Ascending aorta (tissue), 2 donors: ENCODE measurements at regions of chr7 and their contacts with region 1.

Region 1: DNA sequence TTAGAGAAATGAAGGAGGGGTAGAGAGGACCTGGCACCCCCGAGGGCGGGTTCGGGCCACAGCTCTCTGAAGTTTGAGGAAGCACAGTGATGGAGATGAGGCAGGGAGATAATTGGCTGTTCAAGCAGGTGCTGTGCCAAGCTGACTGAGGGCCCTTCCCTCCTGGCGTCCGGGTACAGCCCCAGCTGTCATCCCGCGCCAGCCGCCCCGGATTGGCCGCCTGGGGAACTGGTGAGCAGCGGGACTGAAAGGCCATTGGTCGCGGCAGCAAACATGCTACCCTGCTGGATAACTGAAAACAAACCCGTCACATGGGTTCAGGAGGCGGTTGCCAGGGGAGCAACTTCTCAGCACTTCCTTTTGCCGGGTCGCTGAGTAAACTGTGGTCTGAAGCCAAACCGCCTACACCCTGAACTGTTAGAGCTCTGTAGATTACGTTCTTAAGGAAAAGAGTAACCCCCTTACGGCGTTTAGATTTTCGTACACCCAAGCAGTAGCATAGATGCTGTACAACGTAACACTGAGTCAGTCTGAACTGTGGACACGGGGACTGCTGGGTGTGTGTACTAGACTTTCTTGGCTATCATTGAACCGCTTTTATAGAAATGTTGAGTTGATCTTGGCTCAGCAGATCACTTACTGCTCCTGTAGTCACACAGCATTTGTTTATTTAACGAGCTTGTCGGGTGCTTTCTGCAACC is 1.3 kb downstream of the INSIG1 start:
- DNase-seq: peak; percentile 93 to 96
- H3K4me3 ChIP-seq: peak overlapping the region; percentile 88 to 97
- H3K27ac ChIP-seq: peak overlapping the region; percentile 91 to 94
- H3K4me1 ChIP-seq: peaks cover 3 to 5% of the 10 kb centered on the region in 2 donors
- H3K27me3 ChIP-seq: no peaks in the 10 kb centered on the region
- CTCF ChIP-seq: no peak

Region 2: DNA sequence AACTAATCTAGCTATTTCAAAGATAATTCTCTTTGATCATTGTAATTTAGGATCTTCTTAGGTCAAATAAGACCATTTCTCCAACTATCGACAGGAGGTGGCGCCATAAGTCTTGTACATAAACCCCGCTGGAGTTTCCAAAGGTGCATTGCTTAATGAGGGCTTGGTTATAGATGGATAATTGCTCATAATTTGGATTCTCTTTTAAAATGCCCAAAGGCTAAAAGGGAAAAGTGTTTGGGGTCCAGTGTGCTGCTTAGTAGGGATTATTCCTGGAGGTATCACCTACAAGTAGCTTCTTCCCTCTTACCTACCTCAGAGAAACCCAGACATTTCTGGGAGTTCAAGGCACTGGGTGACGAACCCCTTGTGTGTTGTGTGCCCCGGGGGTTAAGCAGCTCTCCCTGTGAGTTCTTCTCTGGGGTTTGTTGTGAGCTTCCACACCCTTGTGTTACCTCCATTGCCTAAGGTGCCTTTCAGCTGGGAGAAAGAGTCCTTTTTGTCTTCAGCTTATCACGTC is 371.3 kb before region 1 on chr7:
- intact Hi-C with region 1: loop called (anchors 1 kb)
- DNase-seq: peak in 1 of 2 donors; percentile 91
- H3K4me3 ChIP-seq: peak overlapping the region; percentile 67 to 88
- H3K27ac ChIP-seq: peak overlapping the region; percentile 75 to 85
- H3K4me1 ChIP-seq: peaks cover 0 to 6% of the 10 kb centered on the region in 2 donors
- H3K27me3 ChIP-seq: no peaks in the 10 kb centered on the region
- CTCF ChIP-seq: peak; percentile 50 to 74 (median 50)

Region 3: DNA sequence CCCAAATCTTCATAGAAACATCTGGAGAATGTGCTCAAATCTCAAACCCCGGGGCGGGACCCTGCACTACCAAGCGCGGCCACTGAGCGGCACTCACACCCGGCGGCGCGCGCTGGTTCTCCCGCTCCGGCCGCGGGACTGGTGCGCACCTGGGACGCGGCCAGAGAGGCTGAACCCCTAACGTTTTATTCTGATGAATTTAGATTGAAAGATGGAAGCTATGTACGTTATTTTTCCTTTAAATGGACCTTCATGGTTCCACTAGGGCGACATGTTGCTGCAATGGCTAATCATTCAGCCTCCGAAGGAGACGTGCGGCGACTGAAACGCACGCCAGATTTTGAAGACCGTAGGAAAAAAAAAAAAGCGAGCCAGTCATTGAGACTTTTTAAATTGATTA is 108.3 kb before region 1 on chr7:
- intact Hi-C with region 1: loop called (anchors 2 kb)
- DNase-seq: peak in 1 of 2 donors; percentile 75
- H3K4me3 ChIP-seq: no peak overlapping the region
- H3K27ac ChIP-seq: no peak overlapping the region
- H3K4me1 ChIP-seq: no peaks in the 10 kb centered on the region
- H3K27me3 ChIP-seq: no peaks in the 10 kb centered on the region
- CTCF ChIP-seq: peak; percentile 74 to 91 (median 86)

Region 4: GRCh38 chr7:155344600-155345433 is 45.8 kb after region 1 on chr7:
- intact Hi-C with region 1: loop called (anchors 2 kb)
- DNase-seq: peak in 1 of 2 donors; percentile 87
- H3K4me3 ChIP-seq: peak overlapping the region; percentile 27 to 60
- H3K27ac ChIP-seq: no peak overlapping the region
- H3K4me1 ChIP-seq: peaks cover 0 to 4% of the 10 kb centered on the region in 2 donors
- H3K27me3 ChIP-seq: no peaks in the 10 kb centered on the region
- CTCF ChIP-seq: peak; percentile 52 to 93 (median 81)

Region 5: DNA sequence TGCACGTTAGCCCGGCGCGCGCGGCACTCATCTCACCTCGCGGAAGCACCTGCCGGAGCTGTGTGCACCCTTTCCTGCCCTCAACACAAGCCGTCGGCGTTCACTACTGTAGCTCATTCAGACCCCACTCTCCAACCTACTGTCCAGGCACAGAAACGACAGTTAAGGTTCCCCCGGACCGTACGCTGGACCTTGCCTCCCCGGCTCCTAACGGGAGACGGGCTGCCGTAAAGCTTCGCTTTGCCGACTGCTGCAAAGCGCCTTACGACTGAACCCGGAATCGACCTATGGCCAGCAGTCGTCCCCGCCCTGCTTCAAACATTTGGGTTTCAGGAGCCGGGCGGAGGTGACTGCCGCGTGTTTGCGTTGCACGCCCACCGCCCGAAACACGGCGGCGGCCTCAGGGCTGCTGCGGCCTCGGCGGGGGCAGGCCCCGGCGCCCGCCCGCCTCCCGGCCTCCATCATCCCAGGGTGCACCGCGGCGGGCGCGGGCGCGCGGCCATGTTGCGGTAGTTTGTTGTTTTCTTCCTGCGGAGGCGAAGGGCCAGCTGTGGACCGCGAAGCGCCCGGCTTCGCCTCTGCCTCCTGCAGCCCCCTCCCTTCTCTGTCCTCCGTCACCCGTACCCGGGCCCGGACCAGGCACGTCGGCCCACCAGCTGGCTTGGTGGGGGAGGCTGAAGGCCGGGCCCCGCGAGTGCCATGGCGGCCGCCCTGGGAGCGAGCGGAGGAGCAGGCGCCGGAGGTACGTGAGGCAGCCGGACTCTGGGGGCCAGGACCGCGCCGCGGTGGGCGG is 345.4 kb after region 1 on chr7 and contains the start of gene RBM33:
- intact Hi-C with region 1: loop called (anchors 10 kb)
- DNase-seq: peak in 1 of 2 donors; percentile 80
- H3K4me3 ChIP-seq: peak within 1 kb of the TSS; percentile 93 to 100
- H3K27ac ChIP-seq: peak within 1 kb of the TSS; percentile 94
- H3K4me1 ChIP-seq: peaks cover 0 to 13% of the 10 kb centered on the region in 2 donors
- H3K27me3 ChIP-seq: no peaks in the 10 kb centered on the region
- CTCF ChIP-seq: no peak
- total RNA-seq, gene RBM33: 44.2 TPM

Region 6: DNA sequence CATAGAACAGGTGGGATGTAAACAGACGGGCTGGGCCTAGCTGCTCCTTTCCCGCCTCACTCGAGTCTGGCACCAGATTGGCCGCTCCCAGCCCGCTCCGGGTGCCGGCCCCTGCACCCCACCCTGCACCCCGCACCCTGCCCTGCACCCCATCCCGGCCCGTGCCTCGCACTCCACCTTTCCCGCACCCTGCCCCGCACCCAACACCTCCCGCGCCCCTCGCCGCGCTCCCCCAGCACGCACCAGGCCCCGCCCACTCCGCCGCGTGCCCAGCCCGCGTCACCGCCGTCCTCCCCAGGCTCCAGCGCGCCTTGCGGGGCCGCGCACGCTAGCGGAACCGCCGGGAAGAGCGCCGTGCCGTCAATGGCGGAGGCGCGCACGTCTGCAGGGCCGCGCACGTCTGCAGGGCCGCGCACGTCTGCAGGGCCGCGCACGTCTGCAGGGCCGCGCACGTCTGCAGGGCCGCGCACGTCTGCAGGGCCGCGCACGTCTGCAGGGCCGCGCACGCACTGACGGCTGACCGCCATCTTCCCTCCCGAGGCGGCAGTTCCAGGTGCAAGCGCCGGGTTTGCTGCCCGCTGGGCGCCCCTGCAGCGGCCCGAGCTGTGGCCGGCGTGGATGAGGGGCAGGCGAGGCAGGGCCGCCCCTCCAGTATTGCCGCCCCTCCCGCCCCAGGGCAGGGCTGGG is 1839.6 kb after region 1 on chr7 and contains the start of gene UBE3C:
- intact Hi-C with region 1: loop called (anchors 5 kb)
- DNase-seq: peak; percentile 35 to 93
- H3K4me3 ChIP-seq: peak within 1 kb of the TSS; percentile 72 to 94
- H3K27ac ChIP-seq: peak within 1 kb of the TSS; percentile 87 to 90
- H3K4me1 ChIP-seq: peaks cover 9 to 16% of the 10 kb centered on the region in 2 donors
- H3K27me3 ChIP-seq: no peaks in the 10 kb centered on the region
- CTCF ChIP-seq: peak in 1 of 3 experiments; percentile 10
- total RNA-seq, gene UBE3C: 31.7 TPM